ENCODE measurements at regions of chr6 and their contacts with region 1.

Region 1: DNA sequence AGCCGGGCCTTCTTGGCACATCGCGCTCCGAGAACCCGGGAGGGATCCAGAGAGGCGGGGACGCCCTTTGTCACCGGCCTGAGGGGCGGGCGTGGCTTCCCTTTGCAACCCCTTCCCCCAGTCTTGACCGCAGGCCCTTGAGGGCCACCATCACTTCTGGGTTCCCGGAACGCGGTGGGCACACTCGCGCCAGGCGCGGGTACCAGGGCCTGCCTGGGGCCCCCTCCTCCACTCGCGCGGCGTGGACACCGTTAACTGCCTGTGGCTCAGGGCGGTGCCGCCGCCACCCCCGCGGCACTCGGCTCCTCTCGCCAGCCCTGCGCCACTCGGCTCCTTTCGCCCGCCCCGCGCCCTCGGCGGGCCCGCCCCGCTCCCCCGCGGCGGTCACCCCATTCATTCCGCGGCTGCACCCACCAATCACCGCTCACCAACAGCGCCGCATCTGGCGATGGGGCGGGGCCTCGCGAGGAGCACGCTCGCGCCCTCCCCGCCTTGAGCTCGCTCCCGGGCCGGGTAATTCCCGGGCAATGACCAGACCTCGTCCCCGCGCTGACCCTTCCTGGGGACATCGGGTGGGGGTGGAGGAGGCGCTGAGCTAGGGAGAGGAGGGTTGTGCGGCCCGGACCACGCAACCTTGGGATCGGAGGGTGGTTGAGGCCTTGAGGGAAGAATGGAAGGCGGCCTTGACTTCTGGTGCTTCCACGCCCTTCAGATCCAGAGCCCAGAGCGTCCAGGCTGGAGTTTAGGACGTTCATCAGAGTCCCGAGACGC is 10.5 kb upstream of the ELOVL5 start:
- DNase-seq: peak; percentile 92

Region 2: DNA sequence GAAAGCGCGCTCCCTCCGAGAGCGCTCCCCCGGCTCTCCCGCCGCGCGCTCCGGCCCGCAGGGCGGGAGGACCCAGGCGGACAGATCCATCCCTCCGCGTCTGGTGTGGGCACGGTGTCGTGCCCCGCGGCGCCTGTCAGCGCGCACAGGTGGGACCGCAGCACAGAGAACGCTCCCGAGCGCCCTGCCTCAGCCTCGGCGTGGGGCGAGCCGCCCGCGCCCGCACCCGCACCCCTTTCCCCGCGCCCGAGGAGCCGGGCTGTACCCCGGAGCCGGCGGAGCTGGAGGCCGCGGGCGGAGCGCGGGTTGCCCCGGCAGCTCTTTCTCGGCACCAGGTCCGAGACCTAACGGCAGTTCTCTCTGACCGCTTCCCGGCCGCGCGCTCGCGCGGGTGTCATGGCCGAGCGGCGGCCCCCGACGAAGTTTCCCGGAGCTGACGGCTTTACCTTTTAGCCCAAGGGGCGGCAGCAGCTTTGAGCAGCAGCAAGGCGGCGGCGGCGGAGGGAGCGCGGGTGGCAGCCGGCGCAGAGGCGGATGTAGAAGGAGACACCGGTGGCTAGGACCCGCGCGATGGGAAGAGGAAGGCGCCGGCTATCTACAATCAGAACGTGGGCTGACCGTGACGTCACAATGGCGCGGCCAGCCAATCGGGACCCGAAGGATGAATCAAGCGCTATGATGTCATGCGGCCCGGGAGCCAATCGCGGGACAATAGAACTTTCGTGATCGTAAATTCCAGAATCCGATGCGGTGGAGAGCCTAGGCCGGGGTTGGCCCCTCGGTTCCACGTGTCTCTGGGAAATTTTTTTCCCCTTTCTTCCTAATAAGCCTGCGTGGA is 10.7 kb before region 1 on chr6 and contains the start of gene ELOVL5:
- CTCF ChIA-PET with region 1: interaction called, 3 read pairs
- POLR2A ChIA-PET with region 1: interaction called, 23 read pairs
- DNase-seq: peak; percentile 87

Measured in HEK293T (cell line).